ENCODE measurements at regions of chr7 and their contacts with region 1.

Region 1: GRCh38 chr7:116173051-116174028 is 37.0 kb upstream of the TES start:
- DNase-seq: no peak
- H3K4me3 ChIP-seq: no peak overlapping the region
- H3K27ac ChIP-seq: no peak overlapping the region
- H3K27me3 ChIP-seq: peaks cover 0 to 2% (median 0%) of the 10 kb centered on the region in 45 donors
- CTCF ChIP-seq: peak; percentile 43 to 86 (median 70)

Region 2: GRCh38 chr7:116138202-116138801 is 35.0 kb before region 1 on chr7:
- intact Hi-C with region 1: loop called (anchors 2 to 5 kb)
- DNase-seq: no peak
- H3K4me3 ChIP-seq: peak overlapping the region in 4 of 59 donors; percentile 24 to 37 (median 28)
- H3K27ac ChIP-seq: peak overlapping the region in 36 of 59 donors; percentile 17 to 92 (median 75)
- H3K27me3 ChIP-seq: peaks cover 0 to 5% (median 0%) of the 10 kb centered on the region in 45 donors
- CTCF ChIP-seq: peak; percentile 54 to 91 (median 78)

Region 3: DNA sequence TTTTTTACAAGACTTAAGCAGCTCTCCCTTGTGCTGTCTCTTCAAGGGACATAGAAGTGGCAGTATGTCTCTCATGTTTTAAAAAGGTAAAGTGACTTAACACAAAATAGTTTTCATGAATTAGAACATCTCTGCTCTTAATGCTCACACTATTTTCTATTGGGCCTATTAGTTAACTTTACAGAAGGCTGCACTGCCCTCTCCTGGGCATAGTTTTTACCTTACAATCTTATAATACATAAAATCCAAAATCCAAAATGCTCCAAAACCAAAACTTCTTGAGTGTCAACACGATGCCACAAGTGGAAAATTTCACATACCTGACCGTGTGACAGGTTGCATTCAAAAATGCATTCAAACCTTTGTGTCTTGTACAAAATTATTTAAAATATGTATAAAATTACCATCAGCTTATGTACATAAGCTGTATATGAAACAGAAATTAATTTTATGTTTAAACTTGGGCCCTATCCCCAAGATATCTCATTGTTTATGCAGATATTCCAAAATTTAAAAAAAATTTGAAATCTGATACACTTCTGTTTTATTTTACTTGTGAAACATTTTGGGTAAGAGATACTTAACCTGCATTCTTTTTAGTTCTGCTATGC is 62.8 kb after region 1 on chr7:
- intact Hi-C with region 1: loop called (anchors 5 to 10 kb)
- DNase-seq: peak in 3 of 10 donors; percentile 15 to 66 (median 39)
- H3K4me3 ChIP-seq: no peak overlapping the region
- H3K27ac ChIP-seq: no peak overlapping the region
- H3K27me3 ChIP-seq: no peaks in the 10 kb centered on the region
- CTCF ChIP-seq: peak; percentile 40 to 90 (median 68)

Region 4: GRCh38 chr7:116588641-116589594 is 415.6 kb after region 1 on chr7:
- intact Hi-C with region 1: loop called in 1 of 2 experiments (anchors 10 kb)
- DNase-seq: no peak
- H3K4me3 ChIP-seq: no peak overlapping the region
- H3K27ac ChIP-seq: peak overlapping the region in 1 of 59 donors; percentile 12
- H3K27me3 ChIP-seq: no peaks in the 10 kb centered on the region
- CTCF ChIP-seq: peak; percentile 73 to 98 (median 85)